HEK293 (cell line): ENCODE measurements at regions of chr19 and their contacts with region 1.

Region 1: GRCh38 chr19:48595833-48596232 is 10.7 kb upstream of the SPACA4 start:
- H3K4me3 ChIP-seq: no peak overlapping the region
- H3K27ac ChIP-seq: no peak overlapping the region
- H3K4me1 ChIP-seq: no peaks in the 10 kb centered on the region
- CTCF ChIP-seq: no peak

Region 2: DNA sequence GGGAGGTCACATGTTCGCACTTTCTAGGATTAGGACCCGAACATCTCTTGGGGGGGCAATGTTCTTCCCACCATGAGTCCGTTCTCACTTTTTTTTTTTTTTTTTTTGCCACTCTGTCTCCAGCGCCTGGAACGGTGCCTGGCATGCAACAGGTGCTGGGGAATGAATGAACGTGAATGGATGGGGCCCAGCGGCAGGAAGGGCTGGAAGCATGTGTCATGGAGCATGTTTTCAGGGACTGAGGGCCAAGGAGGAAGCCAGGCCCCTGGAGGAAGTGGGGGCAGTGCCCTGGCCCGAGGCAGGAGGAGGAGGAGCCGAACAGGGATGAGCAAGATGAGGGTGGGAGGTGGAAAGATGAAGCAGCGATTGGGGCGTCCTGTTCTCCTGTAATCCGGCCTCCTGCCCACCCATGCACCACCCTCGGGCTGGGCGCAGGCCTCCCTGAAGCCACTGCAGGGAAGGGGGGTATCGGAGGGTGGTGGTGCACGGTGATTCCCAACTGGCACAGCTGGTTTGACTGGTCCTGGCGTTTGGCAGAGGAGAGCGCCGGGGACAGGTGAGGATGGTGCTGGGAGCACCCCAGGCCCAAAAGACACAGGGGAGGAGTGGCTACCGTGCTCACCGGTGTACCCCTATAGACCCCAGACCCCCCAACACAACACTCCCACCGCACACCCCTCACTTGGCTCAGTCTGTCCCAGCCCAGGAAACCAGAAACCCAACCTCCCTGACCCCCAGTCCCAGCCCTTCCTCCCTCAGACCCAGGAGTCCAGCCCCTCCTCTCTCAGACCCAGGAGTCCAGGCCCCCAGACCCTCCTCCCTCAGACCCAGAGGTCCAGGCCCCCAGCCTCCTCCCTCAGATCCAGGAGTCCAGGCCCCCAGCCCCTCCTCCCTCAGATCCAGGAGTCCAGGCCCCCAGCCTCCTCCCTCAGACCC is 52.4 kb before region 1 on chr19:
- CTCF ChIA-PET with region 1: no interaction called
- POLR2A ChIA-PET with region 1: no interaction called
- H3K4me3 ChIP-seq: no peak overlapping the region
- H3K27ac ChIP-seq: no peak overlapping the region
- H3K4me1 ChIP-seq: no peaks in the 10 kb centered on the region; the same call in 1 of the 2 replicates
- CTCF ChIP-seq: no peak

Region 3: DNA sequence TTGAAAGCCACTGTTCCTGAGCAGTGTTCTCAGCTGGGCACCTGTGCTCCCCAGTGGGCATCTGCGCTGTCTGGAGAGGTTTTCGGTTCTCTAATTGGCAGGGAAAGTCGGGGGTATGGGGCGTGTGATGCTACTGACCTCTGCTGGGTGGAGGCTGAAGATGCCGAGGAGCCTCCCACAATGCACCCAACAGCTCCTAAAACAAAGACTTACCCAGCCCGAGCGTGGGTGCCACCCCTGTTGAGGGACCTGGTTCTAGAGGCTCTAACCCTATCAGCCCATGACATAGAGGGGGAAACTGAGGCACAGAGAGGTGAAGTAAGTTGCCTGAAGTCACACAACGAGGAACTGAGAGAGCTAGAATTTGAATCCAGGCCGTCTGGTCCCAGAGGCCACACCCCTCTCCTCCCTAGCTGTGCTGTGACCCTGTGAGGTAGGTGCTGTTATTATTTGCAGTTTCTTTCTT is 13.0 kb after region 1 on chr19:
- CTCF ChIA-PET with region 1: interaction called, 51 read pairs
- POLR2A ChIA-PET with region 1: interaction called, 6 read pairs
- H3K4me3 ChIP-seq: no peak overlapping the region
- H3K27ac ChIP-seq: no peak overlapping the region
- H3K4me1 ChIP-seq: no peaks in the 10 kb centered on the region; the same call in 1 of the 2 replicates
- CTCF ChIP-seq: peak; percentile 86

Region 4: DNA sequence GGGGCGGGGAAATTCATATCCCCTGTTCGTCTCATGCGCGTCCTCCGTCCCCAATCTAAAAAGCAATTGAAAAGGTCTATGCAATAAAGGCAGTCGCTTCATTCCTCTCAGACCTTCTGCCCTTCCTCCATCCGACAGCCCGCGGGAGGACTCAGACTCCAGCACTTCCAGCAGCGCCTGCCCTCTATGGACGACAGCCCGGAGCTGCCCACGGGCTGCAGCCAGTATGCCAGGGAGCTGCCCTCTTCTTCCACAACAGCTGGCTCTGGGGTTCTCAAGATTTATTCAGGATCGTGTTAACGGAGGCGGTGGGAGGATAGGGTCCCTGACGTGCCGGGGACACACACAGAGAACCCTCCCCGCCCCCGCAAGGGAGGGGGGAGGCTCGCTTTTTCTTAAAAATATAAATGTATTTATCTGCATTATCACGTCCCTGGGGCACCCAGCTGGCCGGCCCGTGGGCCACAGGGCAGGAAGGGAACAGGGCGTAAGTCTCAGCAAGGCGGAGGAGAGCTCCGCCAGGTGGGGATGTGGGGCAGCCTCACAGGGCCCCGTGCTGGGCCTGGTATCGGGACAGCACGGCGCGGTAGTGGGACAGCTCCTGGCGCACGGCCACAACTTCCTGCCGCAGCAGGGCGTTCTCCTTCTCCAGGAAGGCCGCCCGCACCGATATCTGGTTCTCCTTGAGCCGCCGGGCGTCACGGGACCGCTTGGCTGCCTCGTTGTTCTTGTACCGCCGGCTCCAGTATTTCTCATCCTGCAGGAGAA is 34.6 kb after region 1 on chr19:
- CTCF ChIA-PET with region 1: no interaction called
- POLR2A ChIA-PET with region 1: no interaction called
- H3K4me3 ChIP-seq: no peak overlapping the region
- H3K27ac ChIP-seq: no peak overlapping the region
- H3K4me1 ChIP-seq: peaks cover 14% of the 10 kb centered on the region
- CTCF ChIP-seq: no peak